Activated CD8-positive, alpha-beta T cell treated with anti-CD3 and anti-CD28 coated beads for 36 hours (primary cell): ENCODE measurements at regions of chr5 and their contacts with region 1.

Region 1: DNA sequence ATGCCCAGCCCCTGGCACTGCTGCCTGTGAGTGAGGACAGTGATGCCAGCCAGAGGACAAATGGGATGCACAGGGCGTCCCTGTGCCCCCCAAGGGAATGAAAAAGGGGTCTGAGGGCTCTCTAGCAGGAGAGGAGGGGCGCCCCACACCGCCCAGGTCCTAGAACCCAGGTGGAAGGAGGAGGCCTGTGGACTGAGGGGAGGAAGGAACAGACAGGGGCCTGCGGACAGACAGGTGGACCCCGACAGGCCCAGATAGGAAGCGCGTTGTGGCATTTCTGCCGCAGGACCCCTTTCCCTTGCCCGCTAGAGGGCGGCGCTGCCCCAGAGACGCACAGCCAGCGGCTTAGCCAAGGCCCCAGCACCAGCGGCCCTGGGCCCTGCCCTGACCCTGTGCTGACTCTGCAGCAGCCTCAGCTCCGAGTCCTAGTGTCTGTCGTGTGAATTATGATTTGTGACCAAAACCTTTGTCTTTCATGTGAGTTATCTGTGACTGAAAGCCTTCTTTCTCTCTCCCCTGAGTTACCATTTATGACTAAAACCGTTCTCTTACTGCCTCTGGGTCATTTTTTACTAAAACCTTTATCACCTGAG is 30.7 kb downstream of the TRIP13 start:
- DNase-seq: peak; percentile 85
- ATAC-seq: peak; percentile 91
- H3K4me3 Mint-ChIP-seq: no peak overlapping the region
- H3K27ac Mint-ChIP-seq: no peak overlapping the region
- H3K4me1 Mint-ChIP-seq: peaks cover 8% of the 10 kb centered on the region
- H3K27me3 Mint-ChIP-seq: peaks cover 28% of the 10 kb centered on the region
- CTCF ChIP-seq: peak; percentile 92

Region 2: GRCh38 chr5:873328-873727 is 50.0 kb before region 1 on chr5:
- CTCF ChIA-PET with region 1: no interaction called
- POLR2A ChIA-PET with region 1: no interaction called
- intact Hi-C with region 1: no loop called
- DNase-seq: no peak
- ATAC-seq: no peak
- H3K4me3 Mint-ChIP-seq: no peak overlapping the region
- H3K27ac Mint-ChIP-seq: no peak overlapping the region
- H3K4me1 Mint-ChIP-seq: no peaks in the 10 kb centered on the region
- H3K27me3 Mint-ChIP-seq: no peaks in the 10 kb centered on the region
- CTCF ChIP-seq: no peak

Region 3: GRCh38 chr5:939368-939767 is 16.0 kb after region 1 on chr5:
- CTCF ChIA-PET with region 1: interaction called, 33 read pairs
- POLR2A ChIA-PET with region 1: no interaction called
- intact Hi-C with region 1: no loop called
- DNase-seq: no peak
- ATAC-seq: no peak
- H3K4me3 Mint-ChIP-seq: no peak overlapping the region
- H3K27ac Mint-ChIP-seq: no peak overlapping the region
- H3K4me1 Mint-ChIP-seq: peaks cover 6% of the 10 kb centered on the region
- H3K27me3 Mint-ChIP-seq: peaks cover 17% of the 10 kb centered on the region
- CTCF ChIP-seq: no peak

Region 4: DNA sequence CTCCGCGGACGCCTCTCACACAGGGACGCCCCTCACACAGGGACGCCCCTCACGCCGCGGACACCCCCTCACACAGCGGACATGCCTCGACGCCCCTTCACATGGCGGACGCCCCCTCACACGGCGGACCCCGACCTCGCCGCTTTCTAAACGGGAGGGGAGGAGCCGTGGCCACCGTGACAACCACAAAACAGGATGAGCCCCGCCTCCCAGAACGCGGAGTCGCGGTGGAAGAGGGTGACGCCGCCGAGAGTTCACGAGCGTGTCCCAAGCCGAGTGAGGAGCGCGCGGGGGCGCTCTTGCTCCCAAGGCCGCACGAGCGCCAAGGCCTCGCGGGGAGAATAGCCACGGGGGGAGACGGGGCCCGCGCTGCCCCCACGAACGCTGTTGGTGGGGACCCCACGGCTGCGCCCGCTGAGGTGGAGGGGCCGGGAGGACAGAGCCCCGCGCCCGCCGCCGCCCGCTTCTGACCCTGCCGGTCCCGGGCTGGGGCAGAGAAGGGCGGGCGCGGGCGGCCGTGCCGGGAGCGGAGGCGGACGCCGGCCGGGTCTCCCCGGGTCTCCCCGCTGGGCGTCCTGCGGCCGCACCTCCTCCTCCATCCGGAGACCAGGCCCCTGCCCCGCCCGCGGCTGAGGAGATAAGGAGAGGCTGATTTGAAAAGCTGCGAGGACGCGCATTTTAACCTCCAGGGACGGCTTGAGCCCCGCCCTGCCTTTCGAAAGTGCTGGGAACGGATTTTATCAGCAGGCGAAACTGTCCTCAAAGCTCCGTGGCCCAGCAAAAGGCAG is 81.3 kb after region 1 on chr5:
- CTCF ChIA-PET with region 1: interaction called, 105 read pairs
- POLR2A ChIA-PET with region 1: no interaction called
- intact Hi-C with region 1: no loop called
- DNase-seq: peak; percentile 53
- ATAC-seq: peak; percentile 38
- H3K4me3 Mint-ChIP-seq: peak overlapping the region; percentile 31
- H3K27ac Mint-ChIP-seq: no peak overlapping the region
- H3K4me1 Mint-ChIP-seq: peaks cover 25% of the 10 kb centered on the region
- H3K27me3 Mint-ChIP-seq: peaks cover 27% of the 10 kb centered on the region
- CTCF ChIP-seq: no peak

Region 5: GRCh38 chr5:1140171-1140817 is 216.9 kb after region 1 on chr5:
- CTCF ChIA-PET with region 1: interaction called, 16 read pairs
- POLR2A ChIA-PET with region 1: no interaction called
- intact Hi-C with region 1: loop called (anchors 5 kb)
- DNase-seq: peak; percentile 87
- ATAC-seq: peak; percentile 89
- H3K4me3 Mint-ChIP-seq: no peak overlapping the region
- H3K27ac Mint-ChIP-seq: no peak overlapping the region
- H3K4me1 Mint-ChIP-seq: peaks cover 3% of the 10 kb centered on the region
- H3K27me3 Mint-ChIP-seq: no peaks in the 10 kb centered on the region
- CTCF ChIP-seq: peak; percentile 78